Colonic mucosa (tissue), 4 donors: ENCODE measurements at regions of chr20 and their contacts with region 1.

Region 1: DNA sequence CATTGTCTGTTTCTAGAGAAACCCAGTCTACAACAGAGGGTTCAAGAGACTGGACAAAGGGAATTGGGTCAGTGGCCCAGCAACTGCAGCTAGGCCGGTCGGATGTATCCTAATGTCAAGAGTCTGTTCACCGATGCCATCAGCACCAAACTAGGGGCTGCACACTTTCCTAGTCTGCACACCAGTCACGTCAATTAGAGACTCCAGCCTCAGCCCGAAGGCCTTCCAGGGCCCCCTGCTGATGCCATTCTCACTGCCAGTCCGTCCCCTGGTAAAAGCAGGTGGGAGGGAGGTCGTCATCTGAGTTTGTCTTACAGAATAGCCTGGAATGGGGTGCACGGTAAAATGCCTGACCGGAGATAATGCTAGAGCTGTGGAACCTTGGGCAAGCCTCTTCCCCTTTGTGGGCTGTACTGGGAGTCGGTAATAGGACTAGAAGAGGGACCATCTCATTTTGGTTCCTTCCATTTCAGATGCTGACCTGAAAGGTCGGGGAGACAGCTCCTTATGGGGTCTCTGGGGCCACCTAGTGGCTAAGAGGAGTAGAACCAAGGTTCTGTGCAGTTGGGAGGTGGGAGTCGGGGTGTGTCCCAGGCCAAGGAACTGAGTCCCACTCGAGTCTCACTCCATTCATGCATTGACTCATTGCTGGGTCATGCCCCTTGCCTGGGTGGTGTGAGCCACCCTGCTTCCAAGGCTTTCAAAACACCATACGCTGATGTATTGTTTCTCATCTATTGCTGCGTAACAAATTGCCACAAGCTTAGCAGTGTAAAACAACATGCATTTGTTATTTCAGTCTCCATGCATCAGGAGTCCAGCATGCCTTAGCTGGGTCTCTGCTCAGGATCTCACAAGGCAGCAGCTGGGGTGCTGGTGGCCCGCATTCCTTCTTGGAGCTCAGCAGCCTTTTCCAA is 5.1 kb downstream of the SOX12 start:
- DNase-seq: no peak
- H3K4me3 ChIP-seq: no peak overlapping the region
- H3K27ac ChIP-seq: no peak overlapping the region
- H3K4me1 ChIP-seq: no peaks in the 10 kb centered on the region
- H3K27me3 ChIP-seq: no peaks in the 10 kb centered on the region
- CTCF ChIP-seq: peak; percentile 77

Region 2: DNA sequence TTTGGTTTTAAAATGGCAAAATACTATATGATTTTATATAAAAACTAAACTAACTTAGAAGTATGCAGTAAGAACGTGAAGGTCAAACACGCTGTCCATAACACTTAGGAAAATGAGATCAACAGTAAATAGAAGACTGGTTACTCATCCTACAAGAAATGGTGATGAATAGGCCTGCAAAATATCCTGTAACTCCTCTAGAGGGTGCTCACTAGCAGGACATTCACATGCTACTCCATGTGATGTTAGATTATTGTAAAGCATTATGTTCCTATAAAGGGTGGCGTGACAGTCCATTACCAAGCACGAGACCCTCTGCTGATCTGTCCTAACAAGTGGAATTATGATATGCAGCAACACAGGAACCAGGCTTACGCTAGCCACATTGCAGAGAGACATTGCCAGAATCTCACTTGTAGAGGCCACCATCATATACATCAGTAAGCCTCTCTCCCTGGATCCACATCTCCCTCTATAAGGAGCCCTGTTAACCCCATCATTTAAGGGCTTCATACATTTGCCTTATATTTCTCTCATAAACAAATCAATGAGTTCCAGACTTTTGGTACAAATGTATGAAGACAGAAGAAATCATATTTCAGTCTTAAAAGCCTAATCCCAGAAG is 121.4 kb before region 1 on chr20:
- intact Hi-C with region 1: loop called (anchors 5 kb)
- DNase-seq: no peak
- H3K4me3 ChIP-seq: no peak overlapping the region
- H3K27ac ChIP-seq: no peak overlapping the region
- H3K4me1 ChIP-seq: no peaks in the 10 kb centered on the region
- H3K27me3 ChIP-seq: no peaks in the 10 kb centered on the region
- CTCF ChIP-seq: peak; percentile 30

Region 3: GRCh38 chr20:251354-251753 is 79.1 kb before region 1 on chr20:
- intact Hi-C with region 1: no loop called
- DNase-seq: no peak
- H3K4me3 ChIP-seq: no peak overlapping the region
- H3K27ac ChIP-seq: no peak overlapping the region
- H3K4me1 ChIP-seq: no peaks in the 10 kb centered on the region
- H3K27me3 ChIP-seq: no peaks in the 10 kb centered on the region
- CTCF ChIP-seq: no peak